ENCODE measurements at regions of chr1 and their contacts with region 1.

Region 1: DNA sequence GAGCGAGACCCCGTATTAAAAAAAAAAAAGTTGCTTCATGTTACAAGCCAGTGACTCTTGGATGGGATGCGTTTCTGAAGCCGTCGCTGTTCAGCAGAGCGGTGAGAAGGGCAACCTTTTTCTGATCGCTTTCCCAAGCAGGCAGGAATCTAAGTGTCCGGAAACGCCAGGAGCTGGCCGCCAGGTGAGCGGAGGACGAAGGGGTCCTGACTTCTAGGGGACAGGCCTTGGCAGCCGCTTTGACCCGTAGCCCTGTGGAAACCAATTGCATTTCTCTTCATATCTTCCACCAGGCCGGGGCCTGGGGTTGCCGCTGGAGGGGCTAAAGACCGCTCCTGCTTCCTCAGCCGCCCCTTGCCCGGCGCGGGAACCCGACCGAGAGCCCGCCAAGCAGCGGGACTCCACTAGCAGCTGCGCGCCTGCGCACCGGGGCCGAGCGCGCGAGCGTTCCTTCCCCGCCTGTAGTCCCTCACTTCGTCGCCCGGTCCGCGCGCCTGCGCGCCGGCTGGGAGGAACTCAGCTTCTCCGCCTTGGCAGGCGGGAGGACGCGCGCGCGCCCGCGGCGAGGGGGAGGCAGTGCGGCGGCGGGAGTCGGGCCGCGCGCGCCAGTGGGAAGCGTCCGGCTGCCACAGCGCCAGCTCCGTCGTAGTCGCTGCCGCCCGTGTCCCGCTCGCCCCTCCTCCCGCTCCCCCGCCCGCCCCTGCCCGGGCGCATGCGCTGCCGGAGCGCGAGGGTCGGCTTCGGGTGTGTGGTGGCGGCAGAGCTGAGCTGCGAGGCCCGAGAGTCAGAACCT is at the start of gene SPEN:
- DNase-seq: peak; percentile 77 to 96
- H3K4me3 ChIP-seq: peak within 1 kb of the TSS; percentile 47 to 76 (median 60)
- H3K27ac ChIP-seq: peak within 1 kb of the TSS; percentile 65; the same call in 1 of the 2 replicates
- H3K4me1 ChIP-seq: peaks cover 0 to 6% (median 2%) of the 10 kb centered on the region in 4 experiments; a peak in 2 of 7 replicates
- H3K27me3 ChIP-seq: no peaks in the 10 kb centered on the region; a peak in 1 of 7 replicates
- CTCF ChIP-seq: peak in 2 of 3 experiments; percentile 4 to 10; a peak in 2 of 4 replicates
- EP300 ChIP-seq: no peak
- POLR2A ChIP-seq: peak in 1 of 2 experiments; percentile 69; a peak in 2 of 3 replicates
- RAD21 ChIP-seq: peak; percentile 1 to 9; a peak in 1 of 4 replicates
- total RNA-seq, gene SPEN: 47.6 and 52.1 TPM in 2 replicates

Region 2: DNA sequence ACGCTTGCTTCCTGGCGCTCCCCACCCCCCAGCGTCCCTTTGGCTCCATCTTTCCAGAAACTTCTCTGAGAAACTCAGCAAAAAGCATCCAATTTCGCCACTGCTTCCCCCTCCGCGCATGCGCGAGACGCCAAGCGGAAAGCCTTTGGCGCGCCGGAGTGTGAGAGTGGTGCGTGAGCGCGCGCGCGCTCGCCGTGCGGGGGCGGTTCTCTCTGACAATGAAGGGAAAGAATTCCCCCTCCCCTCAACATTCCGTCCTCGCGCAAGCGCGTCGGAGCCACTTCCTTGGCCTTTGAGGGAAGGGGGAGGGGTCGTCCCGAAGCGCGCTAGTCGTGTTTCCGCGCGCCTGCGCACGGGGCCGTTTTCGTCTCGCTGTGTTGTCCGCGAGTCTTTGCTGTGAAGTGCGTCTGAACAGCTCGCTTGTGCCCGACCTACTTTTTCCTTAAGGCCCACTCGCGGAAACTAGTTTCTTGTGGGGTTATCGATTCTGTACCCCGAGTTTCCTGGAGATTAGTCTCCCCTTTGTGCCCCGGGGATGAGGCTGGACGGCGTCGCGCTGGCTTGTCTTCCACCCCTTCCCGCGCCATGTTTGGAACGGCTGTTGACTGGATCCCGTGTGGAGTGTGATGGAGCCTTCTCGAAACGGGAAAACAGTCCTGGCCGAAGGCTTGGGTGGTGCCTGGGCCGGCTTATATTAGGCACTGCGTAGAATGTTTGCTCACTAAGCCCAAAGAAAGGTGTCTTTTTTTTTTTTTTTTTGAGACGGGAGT is 11.4 kb before region 1 on chr1:
- CTCF ChIA-PET with region 1: interaction called, 7 read pairs
- POLR2A ChIA-PET with region 1: interaction called, 87 read pairs
- DNase-seq: peak; percentile 91 to 96
- H3K4me3 ChIP-seq: peak overlapping the region; percentile 68 to 80 (median 71)
- H3K27ac ChIP-seq: peak overlapping the region; percentile 98
- H3K4me1 ChIP-seq: peaks cover 0 to 9% (median under 1%) of the 10 kb centered on the region in 4 experiments; a peak in 3 of 7 replicates
- H3K27me3 ChIP-seq: no peaks in the 10 kb centered on the region
- CTCF ChIP-seq: no peak
- EP300 ChIP-seq: 0 out of 3 replicates have a peak, but pooled peaks of 1 of the 2 experiments have one; percentile 72
- POLR2A ChIP-seq: peak; percentile 8 to 40
- RAD21 ChIP-seq: no peak

Region 3: DNA sequence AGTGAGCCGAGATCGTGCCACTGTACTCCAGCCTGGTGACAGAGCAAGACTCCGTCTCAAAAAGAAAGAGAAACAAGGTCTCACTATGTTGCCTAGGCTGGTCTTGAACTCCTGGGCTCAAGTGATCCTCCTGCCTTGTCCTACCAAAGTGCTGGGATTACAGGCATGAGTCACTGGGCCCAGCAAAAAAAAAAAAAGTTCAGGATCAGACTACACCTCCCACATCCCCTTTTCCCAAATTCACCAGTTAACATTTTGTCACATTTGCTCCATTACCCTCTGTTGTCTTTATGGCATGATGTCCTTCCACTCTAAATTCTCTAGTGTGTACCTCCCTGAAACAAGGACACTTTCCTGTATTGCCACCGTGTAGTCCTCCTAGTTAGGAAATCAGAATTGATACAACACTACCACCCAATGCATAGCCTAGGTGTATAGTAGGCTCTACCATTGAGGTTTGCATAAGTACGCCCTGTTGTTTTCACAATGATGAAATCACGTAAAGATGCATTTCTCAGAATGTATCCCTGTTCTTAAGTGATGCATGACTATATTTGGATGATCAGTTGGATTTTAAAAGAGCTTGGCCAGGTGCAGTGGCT is 10.9 kb after region 1 on chr1:
- CTCF ChIA-PET with region 1: interaction called, 4 read pairs
- POLR2A ChIA-PET with region 1: interaction called, 15 read pairs
- DNase-seq: peak in 1 of 2 experiments; percentile 13
- H3K4me3 ChIP-seq: no peak overlapping the region
- H3K27ac ChIP-seq: no peak overlapping the region
- H3K4me1 ChIP-seq: no peaks in the 10 kb centered on the region
- H3K27me3 ChIP-seq: no peaks in the 10 kb centered on the region
- CTCF ChIP-seq: no peak
- EP300 ChIP-seq: no peak
- POLR2A ChIP-seq: no peak
- RAD21 ChIP-seq: no peak

Region 4: GRCh38 chr1:15866721-15867201 is 19.5 kb after region 1 on chr1:
- CTCF ChIA-PET with region 1: interaction called, 4 read pairs
- POLR2A ChIA-PET with region 1: interaction called, 10 read pairs
- DNase-seq: no peak
- H3K4me3 ChIP-seq: no peak overlapping the region
- H3K27ac ChIP-seq: no peak overlapping the region
- H3K4me1 ChIP-seq: no peaks in the 10 kb centered on the region
- H3K27me3 ChIP-seq: no peaks in the 10 kb centered on the region
- CTCF ChIP-seq: no peak
- EP300 ChIP-seq: no peak
- POLR2A ChIP-seq: no peak
- RAD21 ChIP-seq: no peak

Region 5: GRCh38 chr1:15994590-15995351 is 147.5 kb after region 1 on chr1:
- CTCF ChIA-PET with region 1: no interaction called
- POLR2A ChIA-PET with region 1: no interaction called
- DNase-seq: no peak
- H3K4me3 ChIP-seq: no peak overlapping the region
- H3K27ac ChIP-seq: no peak overlapping the region
- H3K4me1 ChIP-seq: no peaks in the 10 kb centered on the region
- H3K27me3 ChIP-seq: peaks cover 0 to 3% (median 0%) of the 10 kb centered on the region in 4 experiments; a peak in 1 of 7 replicates
- CTCF ChIP-seq: peak; percentile 64 to 71 (median 67)
- EP300 ChIP-seq: no peak
- POLR2A ChIP-seq: no peak
- RAD21 ChIP-seq: peak; percentile 53 to 68